PC-9 (cell line): ENCODE measurements at regions of chr4 and their contacts with region 1.

Region 1: GRCh38 chr4:37847311-37847884 is 20.9 kb downstream of the PGM2 start:
- DNase-seq: no peak
- H3K4me3 ChIP-seq: no peak overlapping the region
- H3K27ac ChIP-seq: no peak overlapping the region
- H3K4me1 ChIP-seq: no peaks in the 10 kb centered on the region
- H3K27me3 ChIP-seq: no peaks in the 10 kb centered on the region
- CTCF ChIP-seq: no peak

Region 2: DNA sequence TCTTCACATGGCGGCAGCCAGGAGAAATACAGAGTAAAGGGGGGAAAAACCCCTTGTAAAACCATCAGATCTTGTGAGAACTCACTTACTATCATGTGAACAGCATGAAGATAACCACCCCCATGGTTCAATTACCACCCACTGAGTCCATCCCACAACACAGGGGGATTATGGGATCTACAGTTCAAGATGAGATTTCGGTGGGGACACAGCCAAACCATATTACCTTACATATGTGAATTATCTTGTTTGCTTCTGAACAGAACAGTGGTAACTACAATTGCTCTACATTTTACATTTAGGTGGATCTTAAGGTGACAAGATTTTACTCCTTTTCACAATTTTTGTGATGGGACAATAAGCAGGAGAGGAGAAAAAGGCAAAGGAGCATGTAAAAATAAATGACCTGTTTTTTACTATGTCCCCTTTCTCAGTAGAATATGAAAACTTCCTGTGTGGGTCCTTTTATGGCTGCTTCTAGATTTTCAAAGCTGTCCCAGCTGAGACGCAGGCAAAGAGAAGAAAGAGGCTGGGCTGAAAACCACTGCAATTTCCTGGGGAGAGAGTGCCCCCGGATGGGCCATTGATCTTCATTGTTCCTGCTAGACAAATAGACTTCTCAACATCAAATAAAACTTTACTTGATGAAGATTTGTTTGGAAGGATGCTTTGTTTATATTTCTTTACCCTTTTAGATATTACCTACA is 66.8 kb before region 1 on chr4:
- CTCF ChIA-PET with region 1: no interaction called
- POLR2A ChIA-PET with region 1: no interaction called
- intact Hi-C with region 1: no loop called
- DNase-seq: no peak
- H3K4me3 ChIP-seq: no peak overlapping the region
- H3K27ac ChIP-seq: no peak overlapping the region
- H3K4me1 ChIP-seq: no peaks in the 10 kb centered on the region
- H3K27me3 ChIP-seq: no peaks in the 10 kb centered on the region
- CTCF ChIP-seq: no peak

Region 3: GRCh38 chr4:38002451-38003071 is 155.2 kb after region 1 on chr4:
- CTCF ChIA-PET with region 1: no interaction called
- POLR2A ChIA-PET with region 1: no interaction called
- intact Hi-C with region 1: no loop called
- DNase-seq: peak in 1 of 2 experiments; percentile 40
- H3K4me3 ChIP-seq: no peak overlapping the region
- H3K27ac ChIP-seq: peak overlapping the region; percentile 73
- H3K4me1 ChIP-seq: peaks cover 14% of the 10 kb centered on the region
- H3K27me3 ChIP-seq: no peaks in the 10 kb centered on the region
- CTCF ChIP-seq: no peak

Region 4: DNA sequence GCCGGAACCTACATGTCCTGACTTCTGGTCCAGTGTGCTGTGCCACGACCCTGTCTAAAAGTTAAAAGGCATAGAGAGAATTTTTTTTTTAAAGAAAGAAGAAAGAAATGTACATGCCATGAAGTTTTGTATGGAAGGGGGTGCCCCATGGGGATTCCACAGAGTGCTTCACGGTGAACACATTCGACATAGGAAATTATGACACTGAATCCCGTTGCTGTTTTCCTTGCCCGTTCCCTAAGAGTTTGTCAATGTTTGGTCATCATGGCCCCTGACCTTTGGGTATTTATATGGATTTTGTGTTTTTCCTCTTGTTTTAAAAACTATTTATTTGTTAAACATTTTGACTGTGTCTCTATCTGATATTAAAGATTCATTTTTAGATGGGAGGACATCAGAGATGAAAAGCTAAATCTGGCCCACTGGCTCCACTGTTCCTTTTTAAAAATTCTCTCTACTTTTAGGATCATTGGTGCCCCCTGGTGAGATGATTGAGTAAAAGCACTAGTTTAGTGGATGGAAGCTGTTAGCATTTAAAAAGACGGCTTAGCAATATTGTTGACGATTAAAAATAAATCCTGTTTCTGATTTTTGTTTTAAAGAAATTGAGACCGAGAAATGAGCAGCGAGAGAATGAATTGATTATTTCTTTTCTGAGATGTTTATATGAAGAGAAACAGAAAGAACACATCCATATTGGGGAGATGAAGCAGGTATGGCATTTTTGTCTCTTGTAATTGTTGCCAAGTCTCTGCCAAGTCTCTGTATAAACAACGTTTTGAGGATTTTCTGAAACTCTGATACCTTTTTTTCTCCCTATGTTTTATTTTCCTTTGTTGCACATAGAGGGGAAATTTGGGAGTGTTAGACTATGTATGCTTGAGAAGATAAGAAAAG is 187.8 kb after region 1 on chr4:
- CTCF ChIA-PET with region 1: interaction called, 12 read pairs
- POLR2A ChIA-PET with region 1: no interaction called
- intact Hi-C with region 1: no loop called
- DNase-seq: peak; percentile 10 to 48
- H3K4me3 ChIP-seq: no peak overlapping the region
- H3K27ac ChIP-seq: no peak overlapping the region
- H3K4me1 ChIP-seq: no peaks in the 10 kb centered on the region
- H3K27me3 ChIP-seq: no peaks in the 10 kb centered on the region
- CTCF ChIP-seq: peak; percentile 85